ENCODE measurements at regions of chr2 and their contacts with region 1.

Region 1: DNA sequence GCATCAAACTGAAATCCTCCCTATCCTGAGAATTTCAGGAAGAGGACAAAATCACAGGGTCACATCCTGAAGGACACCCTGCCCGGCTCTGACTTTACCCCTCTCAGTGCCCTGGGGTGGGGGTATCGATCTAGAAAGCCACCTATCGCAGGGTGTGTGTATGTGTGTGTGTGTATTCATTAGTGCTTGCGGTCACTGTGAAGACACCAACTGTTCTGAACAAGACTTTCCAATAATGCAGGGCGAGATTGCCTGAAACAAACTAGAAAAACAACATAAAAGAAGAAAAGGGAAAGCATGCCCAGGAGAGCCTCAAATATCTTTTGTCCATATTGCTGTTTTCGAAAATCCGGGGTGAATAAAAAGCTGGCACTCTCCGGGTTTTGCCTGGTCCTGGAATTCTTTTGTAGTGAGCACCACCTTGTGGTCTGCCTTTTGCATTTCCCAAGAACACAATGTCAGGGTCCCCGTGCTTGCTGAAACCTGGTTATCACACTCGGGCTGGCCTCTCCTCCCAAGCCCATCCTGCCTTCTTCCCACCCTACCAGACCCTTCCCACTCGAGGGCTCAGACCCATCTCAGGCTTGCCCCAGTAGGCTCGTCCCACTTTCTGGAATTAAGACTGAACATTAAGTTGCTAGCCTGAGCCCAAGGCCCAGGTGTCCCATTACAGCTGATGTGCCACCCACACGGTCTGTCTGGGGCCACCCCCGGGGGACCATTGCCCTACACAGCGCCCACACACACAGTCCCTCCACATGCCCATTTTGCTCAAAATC is 25.0 kb upstream of the COPS8 start:
- DNase-seq: no peak
- ATAC-seq: peak; percentile 37
- H3K4me3 ChIP-seq: no peak overlapping the region; the same call in 1 of the 2 replicates
- H3K27ac ChIP-seq: no peak overlapping the region
- H3K4me1 ChIP-seq: peaks cover 38% of the 10 kb centered on the region
- H3K27me3 ChIP-seq: no peaks in the 10 kb centered on the region; a peak in 1 of 4 replicates
- CTCF ChIP-seq: peak; percentile 62 to 84 (median 71); a peak in 5 of 6 replicates
- EP300 ChIP-seq: no peak
- POLR2A ChIP-seq: no peak
- RAD21 ChIP-seq: peak; percentile 86

Region 2: GRCh38 chr2:236309669-236310029 is 751.1 kb before region 1 on chr2:
- CTCF ChIA-PET with region 1: interaction called, 19 read pairs
- POLR2A ChIA-PET with region 1: no interaction called
- RAD21 ChIA-PET with region 1: no interaction called
- SMC1A ChIA-PET with region 1: no interaction called
- in situ Hi-C with region 1: no loop called
- intact Hi-C with region 1: no loop called
- DNase-seq: no peak
- ATAC-seq: peak; percentile 72
- H3K4me3 ChIP-seq: no peak overlapping the region
- H3K27ac ChIP-seq: no peak overlapping the region
- H3K4me1 ChIP-seq: no peaks in the 10 kb centered on the region
- H3K27me3 ChIP-seq: no peaks in the 10 kb centered on the region; a peak in 1 of 4 replicates
- CTCF ChIP-seq: peak; percentile 54 to 67 (median 59)
- EP300 ChIP-seq: no peak
- POLR2A ChIP-seq: no peak
- RAD21 ChIP-seq: peak; percentile 47

Region 3: DNA sequence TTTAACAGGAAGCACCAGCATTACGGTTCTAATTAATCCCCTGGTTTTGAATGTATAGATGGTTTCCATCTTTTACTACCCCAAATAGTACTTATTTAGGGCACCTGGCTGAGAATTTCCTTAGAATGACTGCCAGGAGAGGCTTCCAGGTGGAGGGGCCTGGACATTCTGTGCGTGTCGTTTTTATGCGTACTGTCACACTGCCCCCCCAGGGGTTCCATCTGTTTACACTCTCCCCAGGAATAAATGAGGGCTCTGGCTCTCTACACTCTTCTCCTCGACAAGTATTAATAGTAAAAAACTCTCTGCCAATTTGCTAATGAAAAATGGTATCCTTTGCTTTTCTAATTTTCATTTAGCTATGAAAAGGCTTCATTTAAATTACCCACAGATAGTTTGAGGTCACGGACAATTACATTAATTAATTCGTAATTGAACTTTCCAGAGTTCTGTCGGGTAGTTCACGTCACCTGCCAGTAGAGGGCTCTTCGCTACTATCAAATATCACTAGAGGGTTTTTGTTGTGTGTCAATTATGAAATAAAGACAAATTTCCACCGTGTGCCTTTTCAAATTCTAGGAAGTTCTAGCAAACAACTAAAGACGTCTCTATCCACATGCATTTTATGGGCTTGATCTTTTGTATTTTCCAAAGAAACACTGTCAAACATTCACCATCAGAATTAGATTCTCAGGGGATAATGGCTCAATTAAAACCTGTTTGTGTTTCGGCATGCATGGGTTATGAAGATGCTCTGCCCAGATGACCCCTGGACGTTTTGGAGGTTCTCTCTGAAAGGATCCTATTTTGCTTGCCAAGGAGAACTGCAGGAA is 707.7 kb before region 1 on chr2:
- CTCF ChIA-PET with region 1: interaction called, 27 read pairs
- POLR2A ChIA-PET with region 1: interaction called, 5 read pairs
- RAD21 ChIA-PET with region 1: interaction called, 8 read pairs
- SMC1A ChIA-PET with region 1: interaction called, 12 read pairs
- in situ Hi-C with region 1: no loop called
- intact Hi-C with region 1: loop called (anchors 1 kb)
- DNase-seq: no peak
- ATAC-seq: peak; percentile 58
- H3K4me3 ChIP-seq: no peak overlapping the region
- H3K27ac ChIP-seq: no peak overlapping the region
- H3K4me1 ChIP-seq: no peaks in the 10 kb centered on the region
- H3K27me3 ChIP-seq: no peaks in the 10 kb centered on the region
- CTCF ChIP-seq: peak; percentile 63 to 80 (median 75); a peak in 5 of 6 replicates
- EP300 ChIP-seq: no peak
- POLR2A ChIP-seq: no peak
- RAD21 ChIP-seq: peak; percentile 84

Region 4: DNA sequence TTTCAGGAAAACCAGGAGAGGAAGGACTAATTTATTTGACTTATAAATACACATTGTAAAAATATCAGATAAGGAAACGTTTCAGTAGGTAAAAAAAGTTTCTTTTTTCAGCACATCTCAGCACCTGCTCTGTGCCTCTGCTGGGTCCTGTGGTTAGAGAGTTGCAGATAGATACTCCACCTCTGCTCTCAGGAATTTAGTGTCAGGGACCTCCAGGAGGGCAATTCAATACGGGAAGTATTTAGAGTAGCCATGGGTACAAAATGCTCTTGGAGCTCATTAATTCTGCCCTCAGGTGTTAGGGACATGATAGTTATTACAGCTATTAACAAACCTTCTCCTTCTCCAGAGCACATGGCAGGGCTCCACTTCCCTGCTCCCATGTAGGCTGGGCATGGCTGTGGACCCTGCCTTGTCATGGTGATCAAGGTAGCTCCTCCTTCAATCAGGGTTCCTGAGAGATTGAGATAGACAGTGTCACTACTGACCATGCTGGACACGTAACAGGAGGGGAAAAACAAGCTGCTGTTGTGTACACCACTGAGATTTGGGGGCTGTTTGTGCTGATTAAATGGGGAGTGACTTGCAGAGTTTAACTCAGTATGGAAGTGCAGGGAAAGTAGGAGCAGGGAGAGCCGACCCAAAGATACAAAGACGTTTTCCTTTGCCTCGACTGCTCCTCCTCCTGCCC is 160.6 kb before region 1 on chr2:
- CTCF ChIA-PET with region 1: no interaction called
- POLR2A ChIA-PET with region 1: no interaction called
- RAD21 ChIA-PET with region 1: no interaction called
- SMC1A ChIA-PET with region 1: no interaction called
- in situ Hi-C with region 1: no loop called
- intact Hi-C with region 1: loop called (anchors 10 kb)
- DNase-seq: no peak
- ATAC-seq: no peak
- H3K4me3 ChIP-seq: no peak overlapping the region
- H3K27ac ChIP-seq: no peak overlapping the region
- H3K4me1 ChIP-seq: no peaks in the 10 kb centered on the region
- H3K27me3 ChIP-seq: peaks cover 2 to 3% of the 10 kb centered on the region in 2 experiments; a peak in 1 of 4 replicates
- CTCF ChIP-seq: no peak
- EP300 ChIP-seq: no peak
- POLR2A ChIP-seq: no peak
- RAD21 ChIP-seq: no peak

Region 5: GRCh38 chr2:237085248-237086221 is 24.8 kb after region 1 on chr2 and contains the start of gene COPS8:
- CTCF ChIA-PET with region 1: interaction called, 15 read pairs
- POLR2A ChIA-PET with region 1: interaction called, 3 read pairs
- RAD21 ChIA-PET with region 1: interaction called, 15 read pairs
- SMC1A ChIA-PET with region 1: interaction called, 6 read pairs
- in situ Hi-C with region 1: no loop called
- intact Hi-C with region 1: loop called (anchors 2 kb)
- DNase-seq: peak; percentile 55
- ATAC-seq: peak; percentile 100
- H3K4me3 ChIP-seq: peak within 1 kb of the TSS; percentile 81
- H3K27ac ChIP-seq: peak within 1 kb of the TSS; percentile 69
- H3K4me1 ChIP-seq: peaks cover 3% of the 10 kb centered on the region
- H3K27me3 ChIP-seq: no peaks in the 10 kb centered on the region
- CTCF ChIP-seq: peak; percentile 5 to 41 (median 27); a peak in 3 of 6 replicates
- EP300 ChIP-seq: 0 out of 4 replicates have a peak, but pooled peaks of 1 of the 2 experiments have one; percentile 12
- POLR2A ChIP-seq: peak; percentile 95
- RAD21 ChIP-seq: no peak
- polyA plus RNA-seq, gene COPS8: 106 to 133 TPM

Measured in GM12878 (cell line).